ENCODE measurements at regions of chr13 and their contacts with region 1.

Region 1: DNA sequence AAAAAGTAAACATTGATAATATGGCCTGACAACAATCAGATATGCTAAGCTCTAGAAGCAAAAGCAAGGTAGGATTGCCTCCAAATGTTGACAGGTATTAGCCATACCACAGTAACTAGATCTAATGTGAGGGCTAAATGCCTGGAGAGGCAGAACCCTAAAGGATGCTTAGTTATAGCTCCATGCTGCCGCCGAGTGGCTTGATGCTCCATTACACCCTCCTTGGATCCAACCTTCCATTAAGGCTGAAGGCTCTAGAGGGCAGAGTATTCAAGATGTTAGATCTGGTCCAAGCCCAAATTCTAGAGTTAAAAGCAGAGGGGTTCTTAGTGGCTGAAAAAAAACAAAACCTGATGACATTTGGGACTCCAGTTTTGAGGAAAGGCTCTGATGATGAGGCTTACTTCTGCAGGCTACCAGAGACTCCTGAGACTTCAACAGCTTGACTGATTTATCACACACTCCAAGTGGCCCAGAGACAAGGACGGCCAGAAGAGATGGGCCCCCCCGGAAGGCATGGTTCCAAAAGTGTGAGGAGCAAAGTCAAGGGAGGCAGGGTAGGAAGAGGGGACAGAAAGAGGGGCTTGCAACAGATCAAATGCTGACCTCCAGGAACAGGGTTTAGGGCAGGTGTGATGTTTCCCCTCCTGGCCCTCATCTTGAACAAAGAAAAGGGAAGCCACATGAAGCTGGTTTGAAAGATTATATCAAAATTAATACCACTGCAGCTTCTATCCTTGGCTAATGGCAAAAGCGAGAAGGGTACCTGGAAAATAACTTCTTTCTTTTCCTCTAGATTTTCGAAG is 21.9 kb upstream of the CPB2 start:
- DNase-seq: peak; percentile 76
- ATAC-seq: peak; percentile 84
- H3K4me3 Mint-ChIP-seq: no peak overlapping the region
- H3K27ac Mint-ChIP-seq: peak overlapping the region; percentile 5
- H3K4me1 Mint-ChIP-seq: peaks cover 26% of the 10 kb centered on the region
- H3K27me3 Mint-ChIP-seq: no peaks in the 10 kb centered on the region

Region 2: DNA sequence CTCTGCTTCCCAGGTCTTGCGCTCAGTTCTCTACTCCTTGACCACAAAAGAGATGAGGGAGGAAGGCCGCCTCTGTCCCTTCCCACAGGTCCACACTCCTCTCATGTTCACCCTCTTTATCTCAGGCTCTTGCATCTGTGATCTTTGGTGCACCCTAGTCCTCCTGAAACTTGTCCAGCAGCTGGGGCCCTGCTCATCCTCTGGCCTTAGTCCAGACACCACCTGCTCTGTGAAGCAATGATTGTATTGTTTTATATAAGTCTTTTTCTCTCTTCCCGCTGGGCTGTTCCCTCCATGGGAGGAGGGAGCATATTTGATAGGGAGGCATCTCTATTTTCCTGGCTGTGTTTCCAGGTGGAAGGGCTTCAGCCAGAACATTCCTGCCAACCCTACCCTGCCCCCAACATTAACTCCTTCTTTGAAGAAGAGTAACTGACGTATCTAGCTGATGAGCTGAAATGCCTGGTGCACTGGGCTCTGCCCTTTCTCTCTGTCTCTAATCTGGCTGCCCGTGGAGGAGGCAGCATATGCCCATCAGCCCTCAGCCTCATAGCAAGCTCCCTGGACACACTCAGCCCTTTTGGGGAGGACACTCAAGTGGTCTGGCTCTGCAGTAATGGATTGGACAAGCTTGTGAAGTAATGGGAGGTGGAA is 237.0 kb before region 1 on chr13:
- CTCF ChIA-PET with region 1: no interaction called
- DNase-seq: no peak
- ATAC-seq: no peak
- H3K4me3 Mint-ChIP-seq: no peak overlapping the region
- H3K27ac Mint-ChIP-seq: no peak overlapping the region
- H3K4me1 Mint-ChIP-seq: no peaks in the 10 kb centered on the region
- H3K27me3 Mint-ChIP-seq: peaks cover 11% of the 10 kb centered on the region

Region 3: GRCh38 chr13:46071590-46072249 is 55.0 kb before region 1 on chr13:
- CTCF ChIA-PET with region 1: no interaction called
- DNase-seq: no peak
- ATAC-seq: no peak
- H3K4me3 Mint-ChIP-seq: no peak overlapping the region
- H3K27ac Mint-ChIP-seq: no peak overlapping the region
- H3K4me1 Mint-ChIP-seq: no peaks in the 10 kb centered on the region
- H3K27me3 Mint-ChIP-seq: peaks cover 3% of the 10 kb centered on the region

Region 4: GRCh38 chr13:46143184-46143701 is 16.5 kb after region 1 on chr13:
- CTCF ChIA-PET with region 1: interaction called, 22 read pairs
- DNase-seq: no peak
- ATAC-seq: no peak
- H3K4me3 Mint-ChIP-seq: no peak overlapping the region
- H3K27ac Mint-ChIP-seq: no peak overlapping the region
- H3K4me1 Mint-ChIP-seq: peaks cover 26% of the 10 kb centered on the region
- H3K27me3 Mint-ChIP-seq: no peaks in the 10 kb centered on the region

Region 5: GRCh38 chr13:46176756-46177155 is 50.0 kb after region 1 on chr13:
- CTCF ChIA-PET with region 1: interaction called, 10 read pairs
- DNase-seq: no peak
- ATAC-seq: no peak
- H3K4me3 Mint-ChIP-seq: peak overlapping the region; percentile 96
- H3K27ac Mint-ChIP-seq: peak overlapping the region; percentile 77
- H3K4me1 Mint-ChIP-seq: peaks cover 56% of the 10 kb centered on the region
- H3K27me3 Mint-ChIP-seq: no peaks in the 10 kb centered on the region

Region 6: GRCh38 chr13:46288570-46289259 is 162.0 kb after region 1 on chr13:
- CTCF ChIA-PET with region 1: interaction called, 12 read pairs
- DNase-seq: no peak
- ATAC-seq: peak; percentile 87
- H3K4me3 Mint-ChIP-seq: no peak overlapping the region
- H3K27ac Mint-ChIP-seq: peak overlapping the region; percentile 34
- H3K4me1 Mint-ChIP-seq: peaks cover 15% of the 10 kb centered on the region
- H3K27me3 Mint-ChIP-seq: no peaks in the 10 kb centered on the region

Region 7: GRCh38 chr13:46307554-46307953 is 180.8 kb after region 1 on chr13:
- CTCF ChIA-PET with region 1: no interaction called
- DNase-seq: no peak
- ATAC-seq: no peak
- H3K4me3 Mint-ChIP-seq: no peak overlapping the region
- H3K27ac Mint-ChIP-seq: no peak overlapping the region
- H3K4me1 Mint-ChIP-seq: peaks cover 13% of the 10 kb centered on the region
- H3K27me3 Mint-ChIP-seq: no peaks in the 10 kb centered on the region

Region 8: DNA sequence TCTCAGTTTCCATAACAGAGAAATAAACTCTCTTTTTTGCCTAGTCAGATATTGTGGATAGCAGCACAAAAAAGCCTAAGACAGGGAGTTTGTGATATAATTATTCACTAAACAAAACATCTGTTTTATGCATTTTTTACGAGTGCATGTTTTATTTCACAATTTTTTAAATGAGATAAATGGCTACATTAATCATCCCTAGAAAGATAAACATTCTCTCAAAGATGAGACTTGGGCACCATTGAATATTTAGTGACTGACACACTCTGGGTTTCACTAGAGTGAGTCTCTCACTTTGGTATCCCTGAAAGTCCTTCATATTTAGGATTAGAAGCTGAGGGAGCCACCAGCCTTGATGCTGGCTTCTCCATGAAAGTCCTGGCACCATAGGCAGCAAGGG is 351.9 kb after region 1 on chr13:
- CTCF ChIA-PET with region 1: no interaction called
- DNase-seq: no peak
- ATAC-seq: no peak
- H3K4me3 Mint-ChIP-seq: no peak overlapping the region
- H3K27ac Mint-ChIP-seq: no peak overlapping the region
- H3K4me1 Mint-ChIP-seq: no peaks in the 10 kb centered on the region
- H3K27me3 Mint-ChIP-seq: peaks cover 2% of the 10 kb centered on the region